Activated CD4-positive, alpha-beta T cell treated with anti-CD3 and anti-CD28 coated beads for 36 hours (primary cell): ENCODE measurements at regions of chr16 and their contacts with region 1.

Region 1: GRCh38 chr16:85821441-85822135 is 22.1 kb downstream of the COX4I1 start:
- DNase-seq: peak; percentile 90
- ATAC-seq: peak; percentile 89
- H3K4me3 Mint-ChIP-seq: no peak overlapping the region
- H3K27ac Mint-ChIP-seq: no peak overlapping the region
- H3K4me1 Mint-ChIP-seq: peaks cover 11% of the 10 kb centered on the region
- H3K27me3 Mint-ChIP-seq: peaks cover 7% of the 10 kb centered on the region

Region 2: GRCh38 chr16:85799497-85800337 is 21.9 kb before region 1 on chr16 and contains the starts of genes COX4I1 and EMC8:
- CTCF ChIA-PET with region 1: interaction called, 13 read pairs
- POLR2A ChIA-PET with region 1: interaction called, 5 read pairs
- intact Hi-C with region 1: no loop called
- DNase-seq: peak; percentile 97
- ATAC-seq: peak; percentile 95
- H3K4me3 Mint-ChIP-seq: peak within 1 kb of the TSS; percentile 85
- H3K27ac Mint-ChIP-seq: peak within 1 kb of the TSS; percentile 89
- H3K4me1 Mint-ChIP-seq: peaks cover 60% of the 10 kb centered on the region
- H3K27me3 Mint-ChIP-seq: no peaks in the 10 kb centered on the region
- total RNA-seq, gene COX4I1: 374 to 508 TPM
- total RNA-seq, gene EMC8: 30.4 to 32.9 TPM

Region 3: GRCh38 chr16:85898521-85899442 is 77.2 kb after region 1 on chr16 and contains the start of gene IRF8:
- CTCF ChIA-PET with region 1: interaction called, 73 read pairs
- POLR2A ChIA-PET with region 1: interaction called, 5 read pairs
- intact Hi-C with region 1: loop called (anchors 1 kb)
- DNase-seq: peak; percentile 92
- ATAC-seq: peak; percentile 81
- H3K4me3 Mint-ChIP-seq: peak within 1 kb of the TSS; percentile 78
- H3K27ac Mint-ChIP-seq: peak within 1 kb of the TSS; percentile 92
- H3K4me1 Mint-ChIP-seq: peaks cover 47% of the 10 kb centered on the region
- H3K27me3 Mint-ChIP-seq: peaks cover 3% of the 10 kb centered on the region
- total RNA-seq, gene IRF8: 227 to 250 TPM

Region 4: DNA sequence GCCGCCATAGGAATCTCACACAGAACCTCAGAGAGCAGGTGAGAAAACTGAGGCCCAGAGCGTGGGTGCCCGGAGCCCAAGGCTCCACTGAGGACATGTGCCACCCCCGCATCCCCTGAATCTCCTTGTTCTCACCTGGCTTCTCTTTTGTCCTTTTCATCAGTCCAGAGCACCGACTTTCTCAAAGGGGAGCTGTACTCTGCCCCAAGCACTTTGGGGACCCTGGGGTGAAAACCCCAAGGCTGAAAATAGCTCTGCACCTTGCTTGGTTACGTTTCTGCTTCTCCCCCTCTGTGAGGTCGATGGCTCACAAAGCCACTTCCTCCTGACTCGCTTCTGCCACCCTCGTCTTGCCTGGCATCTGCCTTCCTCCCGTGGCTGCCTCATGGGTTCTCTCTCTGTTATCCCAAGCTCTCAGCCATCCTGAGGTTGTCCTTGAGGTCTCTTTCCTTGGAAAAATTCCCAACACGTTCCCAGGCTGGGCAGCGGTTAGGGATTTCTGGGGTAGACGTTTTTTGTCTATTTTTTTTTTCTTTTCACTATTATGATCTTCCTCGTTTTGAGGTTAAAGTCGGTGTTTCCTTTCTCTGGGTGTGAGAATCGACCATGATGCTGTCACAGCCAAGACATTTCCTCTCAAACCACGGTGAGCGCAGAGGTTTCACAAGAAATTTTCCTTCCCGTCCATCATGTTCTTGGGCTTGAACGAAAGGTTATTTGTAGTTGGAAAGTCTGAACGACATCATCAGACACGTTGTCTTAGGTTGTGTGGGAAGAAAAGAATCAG is 114.6 kb after region 1 on chr16:
- CTCF ChIA-PET with region 1: interaction called, 9 read pairs
- POLR2A ChIA-PET with region 1: no interaction called
- intact Hi-C with region 1: loop called in 1 of 2 experiments (anchors 1 kb)
- DNase-seq: peak; percentile 90
- ATAC-seq: peak; percentile 83
- H3K4me3 Mint-ChIP-seq: peak overlapping the region; percentile 49
- H3K27ac Mint-ChIP-seq: peak overlapping the region; percentile 84
- H3K4me1 Mint-ChIP-seq: peaks cover 63% of the 10 kb centered on the region
- H3K27me3 Mint-ChIP-seq: no peaks in the 10 kb centered on the region

Region 5: GRCh38 chr16:85995541-85996423 is 174.2 kb after region 1 on chr16:
- CTCF ChIA-PET with region 1: interaction called, 120 read pairs
- POLR2A ChIA-PET with region 1: no interaction called
- intact Hi-C with region 1: no loop called
- DNase-seq: peak; percentile 68
- ATAC-seq: peak; percentile 33
- H3K4me3 Mint-ChIP-seq: no peak overlapping the region
- H3K27ac Mint-ChIP-seq: peak overlapping the region; percentile 82
- H3K4me1 Mint-ChIP-seq: peaks cover 62% of the 10 kb centered on the region
- H3K27me3 Mint-ChIP-seq: peaks cover 2% of the 10 kb centered on the region

Region 6: GRCh38 chr16:86044241-86044671 is 222.7 kb after region 1 on chr16:
- CTCF ChIA-PET with region 1: interaction called, 41 read pairs
- POLR2A ChIA-PET with region 1: no interaction called
- intact Hi-C with region 1: no loop called
- DNase-seq: peak; percentile 76
- ATAC-seq: no peak
- H3K4me3 Mint-ChIP-seq: no peak overlapping the region
- H3K27ac Mint-ChIP-seq: no peak overlapping the region
- H3K4me1 Mint-ChIP-seq: peaks cover 18% of the 10 kb centered on the region
- H3K27me3 Mint-ChIP-seq: peaks cover 30% of the 10 kb centered on the region